Heart right ventricle (tissue), 16 donors: ENCODE measurements at regions of chr11 and their contacts with region 1.

Region 1: GRCh38 chr11:83836883-83837654 is 550.9 kb upstream of the CCDC90B start:
- DNase-seq: peak in 1 of 2 donors; percentile 13
- ATAC-seq: peak in 7 of 8 donors; percentile 68 to 85 (median 82)
- H3K4me3 ChIP-seq: no peak overlapping the region
- H3K27ac ChIP-seq: no peak overlapping the region
- H3K4me1 ChIP-seq: peaks cover 0 to 4% (median 0%) of the 10 kb centered on the region in 9 donors
- H3K27me3 ChIP-seq: peaks cover 0 to 3% (median 0%) of the 10 kb centered on the region in 7 donors
- CTCF ChIP-seq: peak; percentile 38 to 71 (median 63)

Region 2: GRCh38 chr11:84249344-84250136 is 412.5 kb after region 1 on chr11:
- intact Hi-C with region 1: loop called in 1 of 10 experiments (anchors 10 kb)
- DNase-seq: no peak
- ATAC-seq: peak in 4 of 8 donors; percentile 21 to 64 (median 34)
- H3K4me3 ChIP-seq: no peak overlapping the region
- H3K27ac ChIP-seq: no peak overlapping the region
- H3K4me1 ChIP-seq: peaks cover 0 to 8% (median 0%) of the 10 kb centered on the region in 9 donors
- H3K27me3 ChIP-seq: no peaks in the 10 kb centered on the region
- CTCF ChIP-seq: no peak

Region 3: DNA sequence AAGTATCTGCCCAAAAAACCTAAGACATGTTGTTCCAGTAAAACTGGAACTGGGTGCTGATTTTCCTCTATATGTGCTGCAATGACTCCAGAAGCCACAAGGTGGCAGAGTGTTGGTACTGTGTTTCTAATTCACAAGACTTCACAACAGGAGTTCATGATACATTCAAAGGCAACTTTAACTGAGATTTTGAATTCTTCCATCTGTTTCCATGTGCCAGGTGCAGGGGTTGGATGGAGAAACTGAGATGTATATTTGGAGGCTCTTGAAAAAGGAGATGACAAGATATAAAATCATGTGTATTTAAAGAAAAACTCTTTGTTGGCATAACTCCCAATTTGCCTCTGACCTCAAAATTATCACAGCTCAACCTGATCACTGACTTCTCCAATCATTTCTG is 547.7 kb after region 1 on chr11:
- intact Hi-C with region 1: loop called in 2 of 10 experiments (anchors 5 to 10 kb)
- DNase-seq: peak in 1 of 2 donors; percentile 28
- ATAC-seq: peak in 1 of 8 donors; percentile 33
- H3K4me3 ChIP-seq: no peak overlapping the region
- H3K27ac ChIP-seq: no peak overlapping the region
- H3K4me1 ChIP-seq: no peaks in the 10 kb centered on the region
- H3K27me3 ChIP-seq: no peaks in the 10 kb centered on the region
- CTCF ChIP-seq: peak; percentile 54 to 84 (median 80)